ENCODE measurements at regions of chr7 and their contacts with region 1.

Region 1: GRCh38 chr7:121395961-121396757 is at the start of gene FAM3C:
- DNase-seq: peak; percentile 82
- ATAC-seq: peak; percentile 87
- H3K4me3 ChIP-seq: peak within 1 kb of the TSS; percentile 65 to 74
- H3K27ac ChIP-seq: peak within 1 kb of the TSS; percentile 95
- H3K4me1 ChIP-seq: peaks cover 40 to 77% of the 10 kb centered on the region in 2 experiments
- H3K27me3 ChIP-seq: no peaks in the 10 kb centered on the region
- CTCF ChIP-seq: peak; percentile 42 to 93 (median 71); a peak in 5 of 6 replicates
- POLR2A ChIP-seq: peak; percentile 72
- RAD21 ChIP-seq: peak; percentile 43
- total RNA-seq, gene FAM3C: 322 TPM

Region 2: DNA sequence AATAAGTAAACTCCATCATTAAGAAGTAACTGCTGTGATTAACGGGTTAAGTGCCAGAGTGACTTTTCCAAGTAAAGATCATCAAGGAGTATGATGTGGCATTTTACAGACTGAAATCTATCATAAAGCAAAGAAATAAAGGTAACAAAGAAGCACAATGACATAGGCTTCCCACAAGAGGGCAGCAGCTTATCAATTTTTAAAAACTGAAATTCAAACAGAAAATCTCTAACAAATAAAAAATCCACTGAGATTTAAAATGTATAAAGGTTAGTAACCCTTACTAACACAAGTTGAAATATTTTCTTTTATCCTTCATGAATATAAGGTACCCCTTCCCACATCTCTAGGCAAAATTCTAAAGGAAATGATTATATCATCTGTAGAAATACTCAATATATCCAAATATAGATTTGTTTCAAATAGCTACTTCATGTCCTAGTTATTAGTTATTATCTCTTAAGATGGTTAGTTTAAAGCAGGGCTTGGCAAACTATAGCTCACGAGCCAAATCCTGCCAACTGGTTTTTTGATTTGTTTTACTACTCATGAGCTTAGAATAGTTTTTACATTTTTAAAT is 29.2 kb before region 1 on chr7:
- CTCF ChIA-PET with region 1: interaction called, 24 read pairs
- POLR2A ChIA-PET with region 1: interaction called, 6 read pairs
- RAD21 ChIA-PET with region 1: interaction called in 1 of 2 experiments, 4 read pairs
- intact Hi-C with region 1: no loop called
- DNase-seq: no peak
- ATAC-seq: 0 out of 2 replicates have a peak, but pooled peaks have one; percentile 45
- H3K4me3 ChIP-seq: no peak overlapping the region
- H3K27ac ChIP-seq: peak overlapping the region; percentile 30; the same call in 1 of the 2 replicates
- H3K4me1 ChIP-seq: peaks cover 34 to 50% of the 10 kb centered on the region in 2 experiments
- H3K27me3 ChIP-seq: no peaks in the 10 kb centered on the region
- CTCF ChIP-seq: peak; percentile 57 to 71 (median 64); a peak in 5 of 6 replicates
- POLR2A ChIP-seq: no peak
- RAD21 ChIP-seq: peak; percentile 69

Region 3: DNA sequence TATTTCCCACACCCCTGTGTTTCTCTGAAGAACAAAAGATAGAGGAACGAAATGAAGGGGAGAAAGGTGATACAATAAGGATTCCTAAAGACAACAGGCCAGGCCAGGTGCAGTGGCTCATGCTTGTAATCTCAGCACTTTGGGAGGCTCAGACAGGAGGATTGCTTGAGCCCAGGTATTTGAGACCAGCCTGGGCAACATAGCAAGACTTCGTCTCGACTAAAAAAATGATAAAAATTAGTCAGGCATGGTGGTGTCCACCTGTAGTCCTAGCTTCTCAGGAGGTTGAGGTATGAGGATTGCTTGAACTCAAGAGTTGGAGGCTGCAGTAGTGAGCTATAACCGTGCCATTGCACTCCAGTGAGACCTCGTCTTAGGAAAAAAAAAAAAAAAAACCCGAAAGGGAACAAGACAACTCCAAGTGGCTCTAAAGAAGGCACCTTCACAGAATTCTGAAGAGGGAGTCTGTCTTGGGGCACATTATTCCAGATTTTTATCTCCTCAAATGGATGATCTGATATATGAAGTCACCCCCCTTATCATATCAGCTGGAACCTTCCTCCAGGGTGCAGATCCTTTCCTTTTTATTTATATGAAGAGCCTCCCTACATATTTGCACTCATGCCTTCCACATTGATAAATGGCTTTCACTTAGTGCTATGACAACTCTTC is 41.4 kb after region 1 on chr7:
- CTCF ChIA-PET with region 1: interaction called, 4 read pairs
- POLR2A ChIA-PET with region 1: interaction called, 10 read pairs
- RAD21 ChIA-PET with region 1: no interaction called
- intact Hi-C with region 1: no loop called
- DNase-seq: no peak
- ATAC-seq: peak; percentile 21; the same call in 1 of the 2 replicates
- H3K4me3 ChIP-seq: peak overlapping the region in 1 of 2 experiments; percentile 39; a peak in 1 of 4 replicates
- H3K27ac ChIP-seq: no peak overlapping the region
- H3K4me1 ChIP-seq: peaks cover 9 to 19% of the 10 kb centered on the region in 2 experiments
- H3K27me3 ChIP-seq: no peaks in the 10 kb centered on the region
- CTCF ChIP-seq: no peak
- POLR2A ChIP-seq: no peak
- RAD21 ChIP-seq: no peak

Region 4: GRCh38 chr7:121530227-121531174 is 134.3 kb after region 1 on chr7:
- CTCF ChIA-PET with region 1: interaction called, 7 read pairs
- POLR2A ChIA-PET with region 1: interaction called, 9 read pairs
- RAD21 ChIA-PET with region 1: interaction called in 1 of 2 experiments, 3 read pairs
- intact Hi-C with region 1: loop called (anchors 1 kb)
- DNase-seq: peak; percentile 100
- ATAC-seq: peak; percentile 96
- H3K4me3 ChIP-seq: peak overlapping the region in 1 of 2 experiments; percentile 17; a peak in 2 of 4 replicates
- H3K27ac ChIP-seq: peak overlapping the region; percentile 77
- H3K4me1 ChIP-seq: peaks cover 32 to 48% of the 10 kb centered on the region in 2 experiments
- H3K27me3 ChIP-seq: no peaks in the 10 kb centered on the region
- CTCF ChIP-seq: no peak
- POLR2A ChIP-seq: no peak
- RAD21 ChIP-seq: peak; percentile 54; the same call in 1 of the 2 replicates